H1 (cell line): ENCODE measurements at regions of chr20 and their contacts with region 1.

Region 1: GRCh38 chr20:46363800-46364634 is 42.4 kb downstream of the ELMO2 start:
- DNase-seq: peak in 1 of 2 experiments; percentile 91
- H3K4me3 ChIP-seq: peak overlapping the region; percentile 84 to 98 (median 96)
- H3K27ac ChIP-seq: peak overlapping the region; percentile 98
- H3K4me1 ChIP-seq: peaks cover 0 to 4% (median 0%) of the 10 kb centered on the region in 4 experiments; a peak in 2 of 7 replicates
- H3K27me3 ChIP-seq: no peaks in the 10 kb centered on the region
- CTCF ChIP-seq: no peak
- EP300 ChIP-seq: no peak
- POLR2A ChIP-seq: peak; percentile 76 to 96
- RAD21 ChIP-seq: no peak

Region 2: DNA sequence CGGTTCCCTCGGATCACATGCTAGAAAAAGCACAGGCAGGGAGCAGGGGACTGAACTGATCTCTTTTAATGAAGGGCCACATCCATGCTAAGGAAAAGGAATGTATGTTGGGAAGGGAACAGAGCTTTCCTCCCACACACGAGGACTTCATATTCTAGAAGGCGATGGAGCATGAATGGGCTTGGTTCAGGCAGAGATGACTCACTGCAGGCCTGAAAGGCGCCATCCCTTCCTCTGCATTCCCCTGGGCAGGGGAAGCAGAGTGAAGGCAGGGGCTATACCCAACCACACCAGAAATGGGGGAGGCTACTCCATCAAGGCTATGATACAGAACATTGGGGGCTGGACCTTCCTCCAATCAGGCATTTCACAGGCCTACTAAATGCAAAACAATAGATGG is 11.8 kb after region 1 on chr20:
- CTCF ChIA-PET with region 1: interaction called, 4 read pairs
- POLR2A ChIA-PET with region 1: interaction called, 11 read pairs
- DNase-seq: no peak
- H3K4me3 ChIP-seq: no peak overlapping the region
- H3K27ac ChIP-seq: no peak overlapping the region
- H3K4me1 ChIP-seq: no peaks in the 10 kb centered on the region
- H3K27me3 ChIP-seq: no peaks in the 10 kb centered on the region
- CTCF ChIP-seq: no peak
- EP300 ChIP-seq: no peak
- POLR2A ChIP-seq: no peak
- RAD21 ChIP-seq: no peak

Region 3: GRCh38 chr20:46406199-46406985 is 42.4 kb after region 1 on chr20 and contains the start of gene ELMO2:
- CTCF ChIA-PET with region 1: interaction called, 3 read pairs
- POLR2A ChIA-PET with region 1: interaction called, 17 read pairs
- DNase-seq: peak; percentile 87 to 93
- H3K4me3 ChIP-seq: peak within 1 kb of the TSS; percentile 72 to 88 (median 82)
- H3K27ac ChIP-seq: peak within 1 kb of the TSS; percentile 74; the same call in 1 of the 2 replicates
- H3K4me1 ChIP-seq: peaks cover 0 to 6% (median 2%) of the 10 kb centered on the region in 4 experiments; a peak in 4 of 7 replicates
- H3K27me3 ChIP-seq: peaks cover 0 to 5% (median 0%) of the 10 kb centered on the region in 4 experiments; a peak in 2 of 7 replicates
- CTCF ChIP-seq: no peak; a peak in 1 of 4 replicates
- EP300 ChIP-seq: no peak
- POLR2A ChIP-seq: peak; percentile 24 to 68
- RAD21 ChIP-seq: no peak
- total RNA-seq, gene ELMO2: 31.1 and 39.7 TPM in 2 replicates

Region 4: GRCh38 chr20:46423882-46424482 is 60.0 kb after region 1 on chr20:
- CTCF ChIA-PET with region 1: no interaction called
- POLR2A ChIA-PET with region 1: no interaction called
- DNase-seq: no peak
- H3K4me3 ChIP-seq: no peak overlapping the region
- H3K27ac ChIP-seq: no peak overlapping the region
- H3K4me1 ChIP-seq: peaks cover 5 to 17% (median 10%) of the 10 kb centered on the region in 4 experiments; a peak in 6 of 7 replicates
- H3K27me3 ChIP-seq: no peaks in the 10 kb centered on the region
- CTCF ChIP-seq: no peak
- EP300 ChIP-seq: no peak
- POLR2A ChIP-seq: no peak
- RAD21 ChIP-seq: no peak

Region 5: DNA sequence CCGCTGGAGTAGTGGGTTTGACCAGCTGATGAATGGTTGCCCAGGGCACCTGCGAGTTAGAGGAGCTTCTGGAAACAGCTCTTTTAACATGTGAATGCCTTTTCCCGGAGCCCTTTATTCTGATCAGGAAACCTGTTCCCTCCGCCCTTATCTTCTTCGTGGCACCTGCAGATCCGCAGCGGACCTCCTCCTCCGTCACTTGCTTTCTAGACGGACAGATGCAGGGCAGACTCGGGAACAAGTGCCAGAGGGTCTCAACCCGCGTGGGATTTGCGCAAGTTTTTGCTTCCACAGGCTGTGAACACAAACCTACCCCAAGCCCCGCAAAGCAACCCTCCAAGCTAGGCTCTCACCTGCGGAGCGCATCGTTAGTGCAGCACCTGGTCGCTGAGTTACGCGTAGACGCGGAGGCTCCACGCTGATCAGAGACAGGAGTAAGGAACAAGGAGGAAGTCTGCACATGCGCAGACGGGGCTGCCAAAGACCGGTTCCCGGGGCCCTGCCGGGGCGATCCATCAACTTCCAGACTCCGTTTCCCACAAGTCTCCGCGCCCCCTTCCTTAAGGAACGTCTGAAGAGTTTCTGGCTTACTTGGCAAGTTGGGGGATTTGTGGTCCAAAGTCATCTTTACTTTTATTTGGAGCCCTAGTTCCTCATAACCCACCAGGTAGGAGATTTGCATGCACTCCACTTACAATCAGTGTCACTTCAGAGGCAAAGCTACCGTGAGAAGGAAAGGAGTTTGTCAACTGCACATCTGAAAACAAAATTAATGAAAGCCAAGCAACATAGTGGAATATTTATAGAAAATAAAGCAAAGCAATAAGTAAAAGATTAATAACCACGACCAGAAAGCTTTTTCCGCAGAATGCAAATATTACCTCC is 95.1 kb after region 1 on chr20:
- CTCF ChIA-PET with region 1: no interaction called
- POLR2A ChIA-PET with region 1: no interaction called
- DNase-seq: peak; percentile 76 to 96
- H3K4me3 ChIP-seq: peak overlapping the region; percentile 47 to 82 (median 66); a peak in 7 of 8 replicates
- H3K27ac ChIP-seq: peak overlapping the region; percentile 74; the same call in 1 of the 2 replicates
- H3K4me1 ChIP-seq: peaks cover 4 to 12% (median 6%) of the 10 kb centered on the region in 4 experiments; a peak in 6 of 7 replicates
- H3K27me3 ChIP-seq: no peaks in the 10 kb centered on the region
- CTCF ChIP-seq: no peak
- EP300 ChIP-seq: no peak
- POLR2A ChIP-seq: peak in 1 of 2 experiments; percentile 69; a peak in 2 of 3 replicates
- RAD21 ChIP-seq: no peak